GM10248 (cell line): ENCODE measurements at regions of chr2 and their contacts with region 1.

Region 1: DNA sequence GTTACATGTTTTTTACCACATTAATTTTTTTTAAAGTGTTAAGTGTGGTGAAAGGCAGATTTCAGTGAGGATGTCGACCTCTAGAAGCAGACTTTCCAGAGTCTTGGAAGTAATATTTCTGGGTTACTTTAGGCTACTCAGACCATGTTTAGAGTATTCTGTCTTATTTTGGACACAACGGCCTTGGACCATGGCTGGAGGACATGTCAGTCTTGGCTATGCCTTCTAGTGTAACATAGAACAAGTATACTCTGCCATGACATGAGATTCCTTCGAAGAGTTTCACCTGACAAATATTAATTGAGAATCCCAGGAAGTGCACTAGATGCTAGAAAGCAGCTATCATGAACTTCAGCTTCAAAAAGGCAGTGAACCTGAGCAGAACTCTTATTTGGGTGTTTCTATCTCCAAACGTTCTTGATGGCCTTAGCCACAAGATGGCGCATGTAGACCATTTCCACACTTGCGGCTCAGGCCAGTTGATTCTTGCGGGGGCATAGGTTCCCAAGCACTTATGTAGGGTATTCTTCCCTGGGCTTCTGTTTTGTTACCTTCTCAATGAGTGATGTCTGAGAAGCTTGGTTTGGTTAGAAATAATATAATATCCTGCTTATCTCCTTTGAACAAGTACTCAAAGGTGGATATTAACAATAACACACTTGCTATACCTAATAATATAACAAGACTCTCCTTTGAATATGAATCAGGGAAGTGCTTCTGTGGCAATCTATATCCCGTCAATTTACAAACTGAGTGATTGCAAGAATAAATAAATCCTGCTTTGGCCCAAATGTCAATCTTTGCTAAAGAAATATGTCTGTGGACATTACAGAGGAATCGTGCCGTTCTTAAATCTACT is 62.0 kb downstream of the CACNB4 start:
- DNase-seq: peak; percentile 74
- CTCF ChIP-seq: peak; percentile 81

Region 2: GRCh38 chr2:151543876-151544275 is 493.0 kb before region 1 on chr2:
- CTCF ChIA-PET with region 1: no interaction called
- POLR2A ChIA-PET with region 1: no interaction called
- DNase-seq: no peak
- CTCF ChIP-seq: no peak

Region 3: DNA sequence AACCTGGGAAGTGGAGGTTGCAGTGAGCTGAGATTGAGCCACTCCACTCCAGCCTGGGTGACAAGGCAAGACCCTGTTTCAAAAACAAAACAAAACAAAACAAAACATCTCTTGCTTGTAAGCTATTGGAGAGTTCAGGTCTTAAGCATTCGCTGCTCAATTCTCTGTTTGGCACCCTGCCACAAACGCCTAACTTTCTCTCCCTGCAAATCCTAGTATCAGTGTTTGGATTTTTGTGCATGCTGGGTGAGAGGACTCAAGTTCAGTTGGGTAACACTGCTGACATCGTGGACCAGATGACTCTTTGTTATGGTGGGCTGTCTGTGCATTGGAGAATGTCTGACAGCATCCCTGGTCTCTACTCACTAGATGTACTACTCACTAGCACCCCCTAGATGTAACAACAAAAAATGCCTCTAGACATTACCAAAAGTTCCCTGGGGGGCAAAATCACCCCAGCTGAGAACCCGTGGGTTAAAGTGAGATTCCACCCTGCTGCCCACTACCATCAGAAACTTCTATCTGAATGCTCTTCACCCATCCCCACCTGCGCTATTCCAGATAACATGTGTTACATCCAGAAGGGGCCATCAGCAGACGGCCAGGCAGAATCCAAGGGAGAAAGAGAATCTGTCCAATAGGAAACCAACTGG is 11.1 kb after region 1 on chr2:
- CTCF ChIA-PET with region 1: interaction called, 73 read pairs
- POLR2A ChIA-PET with region 1: no interaction called
- DNase-seq: no peak
- CTCF ChIP-seq: peak; percentile 45

Region 4: DNA sequence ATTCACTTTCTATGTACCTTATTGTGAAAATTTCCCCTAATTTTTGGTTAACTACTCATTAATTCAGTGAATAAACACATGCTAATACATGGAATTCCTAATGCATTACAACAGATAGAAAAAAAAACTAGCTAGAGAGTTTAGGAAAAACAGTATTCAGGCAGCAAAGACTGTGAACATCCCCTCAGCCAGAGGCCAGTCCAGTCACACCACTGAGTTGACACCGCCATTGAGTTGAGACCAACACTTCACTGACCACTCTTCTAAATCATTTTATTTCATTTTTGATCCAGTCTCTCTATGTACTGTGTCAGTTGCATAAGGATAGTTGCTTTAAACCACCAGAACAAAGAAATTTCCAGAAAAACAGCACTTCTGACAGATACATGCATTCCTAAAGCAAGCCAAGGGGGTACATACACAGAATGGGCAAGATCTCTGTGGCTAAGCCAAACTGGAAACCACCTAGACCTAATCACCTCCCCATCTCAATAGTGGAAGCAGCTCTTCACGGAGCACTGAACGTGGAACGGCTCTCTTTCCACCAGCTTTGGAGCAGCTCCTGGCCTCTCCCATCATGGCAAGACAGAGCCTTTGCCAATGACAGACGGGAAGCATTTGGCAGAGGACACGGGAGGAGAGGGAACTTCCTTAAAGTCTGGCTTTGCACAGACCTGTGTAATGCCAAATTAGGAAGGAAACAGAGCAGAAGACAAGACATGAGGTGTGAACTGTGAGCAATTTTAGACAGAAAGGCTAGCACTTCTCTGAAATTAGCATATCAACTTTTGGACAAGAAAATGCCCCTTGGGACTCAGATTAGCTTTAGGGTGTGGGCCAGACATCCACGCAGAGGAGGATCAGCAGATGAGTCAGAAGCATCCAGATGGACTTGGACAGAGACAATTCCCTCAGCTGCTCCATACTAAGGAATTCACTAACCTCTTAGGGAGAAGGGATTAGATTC is 25.6 kb after region 1 on chr2:
- CTCF ChIA-PET with region 1: interaction called, 14 read pairs
- POLR2A ChIA-PET with region 1: no interaction called
- DNase-seq: no peak
- CTCF ChIP-seq: no peak

Region 5: DNA sequence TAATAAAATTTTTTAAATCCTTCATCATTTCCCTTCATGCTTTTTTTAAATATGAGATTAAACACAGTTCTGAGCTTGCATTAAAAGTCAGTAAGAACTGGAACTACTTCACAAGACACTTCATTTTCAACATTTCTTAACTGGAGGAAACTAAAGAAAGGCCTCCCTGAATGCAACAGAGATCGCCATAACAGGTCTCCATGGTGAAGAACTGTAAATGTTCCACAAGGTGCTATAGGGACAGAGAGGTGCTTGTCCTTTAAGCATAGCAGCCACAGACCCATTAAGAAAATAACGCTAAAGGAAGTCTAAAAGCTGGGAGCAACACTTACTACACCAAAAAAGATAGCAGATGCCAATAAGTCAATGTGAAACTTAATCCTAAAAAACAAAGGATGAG is 130.2 kb after region 1 on chr2:
- CTCF ChIA-PET with region 1: interaction called, 12 read pairs
- POLR2A ChIA-PET with region 1: no interaction called
- DNase-seq: no peak
- CTCF ChIP-seq: no peak

Region 6: GRCh38 chr2:152175458-152176325 is 138.9 kb after region 1 on chr2 and contains the start of gene STAM2:
- CTCF ChIA-PET with region 1: interaction called, 12 read pairs
- POLR2A ChIA-PET with region 1: no interaction called
- DNase-seq: peak; percentile 94
- CTCF ChIP-seq: peak; percentile 97

Region 7: DNA sequence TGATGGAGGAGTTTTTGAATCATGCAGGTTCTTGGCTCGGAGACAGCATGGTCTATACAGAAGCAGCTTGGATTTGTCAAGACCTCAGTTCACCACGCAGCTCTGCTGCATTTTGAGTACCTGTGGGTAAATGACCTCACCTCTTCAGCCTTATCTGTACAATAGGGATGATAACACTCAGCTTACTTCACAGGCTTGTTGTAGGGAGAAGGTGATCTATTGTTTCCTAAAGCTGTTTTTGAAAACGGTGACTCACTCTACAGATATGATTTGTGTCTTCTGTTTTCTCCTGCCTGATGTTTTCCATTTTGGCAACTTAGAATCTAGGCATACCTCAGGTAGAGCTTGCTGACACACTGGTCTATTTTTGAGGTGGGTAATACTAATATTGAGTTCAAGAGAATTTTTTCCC is 378.4 kb after region 1 on chr2:
- CTCF ChIA-PET with region 1: interaction called, 10 read pairs
- POLR2A ChIA-PET with region 1: no interaction called
- DNase-seq: no peak
- CTCF ChIP-seq: no peak